Psoas muscle (tissue), 8 donors: ENCODE measurements at regions of chr13 and their contacts with region 1.

Region 1: GRCh38 chr13:28792992-28793391 is 27.1 kb upstream of the MTUS2 start:
- DNase-seq: no peak
- ATAC-seq: no peak
- H3K4me3 ChIP-seq: no peak overlapping the region
- H3K27ac ChIP-seq: no peak overlapping the region
- H3K4me1 ChIP-seq: no peaks in the 10 kb centered on the region
- H3K27me3 ChIP-seq: peaks cover 0 to 10% (median 3%) of the 10 kb centered on the region in 3 donors
- CTCF ChIP-seq: no peak

Region 2: DNA sequence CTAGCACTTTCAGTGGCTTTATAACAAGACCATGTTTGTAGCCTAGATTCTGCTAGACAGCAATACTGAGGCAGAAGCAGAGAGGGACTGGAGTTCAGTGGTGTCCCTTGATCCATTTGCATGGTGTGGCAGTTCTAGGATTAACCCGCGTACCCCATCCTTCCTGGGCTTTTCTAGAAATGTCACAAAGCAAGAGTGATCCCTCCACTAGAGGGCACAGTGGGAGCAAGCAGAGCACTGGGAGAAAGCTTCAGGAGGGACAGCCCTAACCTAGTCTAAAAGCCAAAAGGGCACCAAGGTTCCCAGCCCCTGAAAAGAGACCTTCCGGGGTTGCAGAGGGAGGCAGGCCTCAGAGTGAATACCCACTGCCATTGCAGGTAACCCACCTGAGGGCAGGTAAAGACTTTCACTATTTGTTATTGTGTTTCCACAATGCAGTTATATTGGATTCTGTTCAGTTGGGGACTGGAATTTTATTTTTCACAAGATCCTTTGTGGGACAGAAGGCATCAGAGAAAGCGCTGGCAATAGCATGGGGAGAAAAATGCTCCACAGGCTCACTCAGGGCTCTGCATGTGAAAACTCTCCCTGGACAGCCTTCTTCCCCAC is 468.7 kb before region 1 on chr13:
- intact Hi-C with region 1: loop called (anchors 2 to 10 kb)
- DNase-seq: no peak
- ATAC-seq: peak in 3 of 4 donors; percentile 32 to 70 (median 70)
- H3K4me3 ChIP-seq: no peak overlapping the region
- H3K27ac ChIP-seq: no peak overlapping the region
- H3K4me1 ChIP-seq: peaks cover 4% of the 10 kb centered on the region
- H3K27me3 ChIP-seq: no peaks in the 10 kb centered on the region
- CTCF ChIP-seq: peak; percentile 65

Region 3: DNA sequence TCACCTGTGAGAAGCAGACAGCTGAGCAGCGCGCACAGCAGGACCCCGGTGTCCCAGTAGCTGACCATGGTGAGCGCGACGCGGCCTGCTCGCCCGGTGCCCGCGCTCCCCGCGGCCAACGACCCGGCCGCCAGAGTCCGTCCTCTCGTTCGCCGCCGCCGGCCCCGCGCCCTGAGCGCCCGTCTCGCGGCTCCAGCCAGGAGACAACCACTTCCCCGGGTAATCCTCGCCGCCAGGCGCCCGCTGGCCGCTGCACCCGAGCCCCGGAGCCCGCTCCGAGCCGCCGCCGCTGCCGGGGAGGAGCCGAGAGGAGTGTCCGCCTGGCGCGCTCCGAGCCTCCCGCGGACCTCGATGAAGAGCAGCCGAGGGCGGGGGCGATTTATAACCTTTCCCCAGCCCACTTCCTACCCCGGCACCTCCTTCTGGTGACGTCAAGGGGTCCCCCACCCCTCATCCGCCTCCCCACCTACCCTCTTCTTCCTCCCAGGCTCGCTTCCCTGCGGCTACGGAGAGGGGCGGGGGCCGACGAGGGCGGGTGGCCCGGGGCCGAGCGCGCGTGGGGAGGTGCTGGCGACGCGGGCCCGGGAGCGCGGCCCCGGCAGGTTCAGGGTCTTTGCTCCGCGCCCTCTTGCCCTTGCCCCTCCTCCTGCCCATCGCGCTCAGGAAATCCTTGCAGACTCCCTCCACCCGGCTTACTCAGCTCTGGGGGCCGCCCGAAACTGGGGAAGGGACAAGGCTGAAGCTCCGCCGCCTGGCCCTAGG is 298.0 kb before region 1 on chr13 and contains the start of gene FLT1:
- intact Hi-C with region 1: no loop called
- DNase-seq: peak; percentile 55 to 77
- ATAC-seq: peak; percentile 37 to 69 (median 60)
- H3K4me3 ChIP-seq: peak within 1 kb of the TSS; percentile 72
- H3K27ac ChIP-seq: peak within 1 kb of the TSS; percentile 71
- H3K4me1 ChIP-seq: peaks cover 3% of the 10 kb centered on the region
- H3K27me3 ChIP-seq: peaks cover 0 to 65% (median 0%) of the 10 kb centered on the region in 3 donors
- CTCF ChIP-seq: no peak
- total RNA-seq, gene FLT1: 15.6 to 38.6 (median 24.4) TPM

Region 4: DNA sequence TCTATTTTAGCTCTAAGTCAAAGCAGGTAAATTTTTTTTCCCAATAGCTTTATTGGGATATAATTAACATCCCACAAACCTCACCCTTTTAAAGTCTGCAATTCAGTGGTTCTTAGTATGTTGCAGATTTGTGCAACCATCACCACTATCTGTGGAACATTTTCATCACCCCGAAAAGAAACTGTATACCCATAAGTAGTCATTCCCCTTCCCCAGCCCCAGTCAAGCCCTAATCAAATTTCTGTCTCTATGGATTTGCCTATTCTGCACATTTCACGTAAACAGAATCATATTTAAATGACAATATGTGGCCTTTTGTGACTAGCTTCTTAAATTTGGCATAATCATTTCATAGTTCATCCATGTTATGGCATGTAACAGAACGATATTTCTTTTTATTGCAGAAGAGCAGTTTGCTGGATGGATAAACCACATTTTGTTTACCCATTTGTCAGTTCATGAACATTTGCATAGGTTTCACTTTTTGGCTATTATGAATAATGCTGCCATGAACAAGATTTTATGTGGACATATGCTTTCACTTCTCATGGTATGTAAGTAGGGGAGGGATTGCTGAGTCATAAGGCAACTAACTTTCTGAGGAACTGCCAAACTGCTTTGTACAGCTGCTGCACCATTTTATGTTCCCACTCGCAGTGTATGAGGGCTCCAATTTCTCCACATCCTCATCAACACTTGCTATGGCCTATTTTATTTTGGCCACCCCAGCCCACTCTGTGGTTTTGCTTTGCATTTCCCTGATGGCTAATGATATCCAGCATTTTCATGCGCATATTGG is 85.2 kb before region 1 on chr13:
- intact Hi-C with region 1: loop called in 1 of 2 experiments (anchors 10 kb)
- DNase-seq: no peak
- ATAC-seq: peak in 3 of 4 donors; percentile 59 to 73 (median 72)
- H3K4me3 ChIP-seq: no peak overlapping the region
- H3K27ac ChIP-seq: peak overlapping the region; percentile 63
- H3K4me1 ChIP-seq: peaks cover 9% of the 10 kb centered on the region
- H3K27me3 ChIP-seq: no peaks in the 10 kb centered on the region
- CTCF ChIP-seq: no peak